Transverse colon (tissue), 4 donors: ENCODE measurements at regions of chr18 and their contacts with region 1.

Region 1: GRCh38 chr18:39886136-39886535 is 2068.9 kb upstream of the PIK3C3 start:
- DNase-seq: no peak
- H3K4me3 ChIP-seq: no peak overlapping the region
- H3K27ac ChIP-seq: no peak overlapping the region
- H3K4me1 ChIP-seq: no peaks in the 10 kb centered on the region
- H3K27me3 ChIP-seq: no peaks in the 10 kb centered on the region
- CTCF ChIP-seq: no peak
- EP300 ChIP-seq: no peak
- POLR2A ChIP-seq: no peak

Region 2: DNA sequence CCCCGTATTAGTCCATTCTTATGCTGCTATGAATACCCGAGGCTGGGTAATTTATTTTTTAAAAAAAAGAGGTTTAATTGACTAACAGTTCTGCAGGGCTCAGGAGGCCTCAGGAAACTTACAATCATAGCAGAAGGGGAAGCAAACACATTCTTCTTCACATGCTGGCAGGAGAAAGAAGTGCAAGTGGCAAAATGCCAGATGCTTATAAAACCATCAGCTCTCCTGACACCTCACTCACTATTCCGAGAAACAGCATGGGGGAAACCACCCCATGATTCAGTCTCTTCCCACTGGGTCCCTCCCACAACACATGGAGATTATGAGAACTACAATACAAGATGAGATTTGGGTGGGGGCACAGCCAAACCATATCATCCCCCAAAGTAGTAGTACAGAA is 79.6 kb before region 1 on chr18:
- in situ Hi-C with region 1: no loop called
- intact Hi-C with region 1: no loop called
- DNase-seq: no peak
- H3K4me3 ChIP-seq: no peak overlapping the region
- H3K27ac ChIP-seq: no peak overlapping the region
- H3K4me1 ChIP-seq: no peaks in the 10 kb centered on the region
- H3K27me3 ChIP-seq: no peaks in the 10 kb centered on the region
- CTCF ChIP-seq: no peak
- EP300 ChIP-seq: no peak
- POLR2A ChIP-seq: no peak

Region 3: DNA sequence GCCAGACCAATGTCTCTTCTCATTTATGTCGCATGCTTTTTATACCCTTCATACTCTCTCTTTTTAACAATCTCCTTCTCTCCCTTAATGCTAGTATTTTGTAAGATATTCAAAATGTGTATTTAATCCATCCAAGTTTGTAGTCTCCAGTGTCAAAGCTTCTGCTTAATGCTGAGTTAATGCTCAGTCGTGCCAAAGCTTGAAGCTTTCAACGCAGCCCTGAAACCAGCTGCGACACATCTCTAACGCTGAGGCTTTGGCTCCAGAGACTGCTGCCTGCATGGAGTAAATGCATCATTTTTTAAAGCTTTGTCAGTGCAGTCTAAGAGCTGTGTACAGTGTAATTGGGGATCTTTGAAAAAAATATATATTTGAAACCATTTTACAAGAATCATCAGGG is 39.9 kb before region 1 on chr18:
- in situ Hi-C with region 1: no loop called
- intact Hi-C with region 1: no loop called
- DNase-seq: no peak
- H3K4me3 ChIP-seq: no peak overlapping the region
- H3K27ac ChIP-seq: no peak overlapping the region
- H3K4me1 ChIP-seq: peaks cover 0 to 4% (median 3%) of the 10 kb centered on the region in 4 donors
- H3K27me3 ChIP-seq: peaks cover 6% of the 10 kb centered on the region
- CTCF ChIP-seq: no peak
- EP300 ChIP-seq: no peak
- POLR2A ChIP-seq: no peak

Region 4: DNA sequence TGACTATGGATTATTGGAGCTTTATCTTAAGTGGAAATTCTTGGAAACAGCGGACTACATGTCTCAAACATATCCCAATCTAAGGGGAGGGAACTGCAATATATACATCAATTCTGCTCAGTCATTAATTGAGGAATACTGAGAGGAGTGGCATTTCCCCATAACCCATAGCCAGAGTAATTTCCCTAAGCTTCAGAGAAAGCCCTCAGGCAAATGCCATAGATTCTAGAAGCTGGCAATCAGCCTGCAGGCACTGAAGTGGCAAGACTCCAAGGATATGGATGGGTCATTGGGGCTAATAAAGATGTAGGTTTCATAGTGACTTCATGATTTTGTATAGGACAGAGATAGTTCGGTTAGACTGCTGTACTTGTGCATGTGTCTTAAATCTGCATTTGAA is 108.4 kb after region 1 on chr18:
- in situ Hi-C with region 1: loop called in 1 of 4 experiments (anchors 25 kb)
- intact Hi-C with region 1: no loop called
- DNase-seq: no peak
- H3K4me3 ChIP-seq: no peak overlapping the region
- H3K27ac ChIP-seq: no peak overlapping the region
- H3K4me1 ChIP-seq: no peaks in the 10 kb centered on the region
- H3K27me3 ChIP-seq: no peaks in the 10 kb centered on the region
- CTCF ChIP-seq: no peak
- EP300 ChIP-seq: no peak
- POLR2A ChIP-seq: no peak